Caco-2 (cell line): ENCODE measurements at regions of chr9 and their contacts with region 1.

Region 1: GRCh38 chr9:36008774-36009300 is 27.9 kb upstream of the RECK start:
- DNase-seq: peak; percentile 70 to 73
- H3K4me3 ChIP-seq: no peak overlapping the region
- H3K4me3 Mint-ChIP-seq: no peak overlapping the region
- H3K27ac Mint-ChIP-seq: no peak overlapping the region
- H3K4me1 ChIP-seq: peaks cover 21% of the 10 kb centered on the region
- H3K4me1 Mint-ChIP-seq: peaks cover 18% of the 10 kb centered on the region
- H3K27me3 ChIP-seq: no peaks in the 10 kb centered on the region
- H3K27me3 Mint-ChIP-seq: peaks cover 13% of the 10 kb centered on the region
- CTCF ChIP-seq: peak; percentile 96 to 98

Region 2: DNA sequence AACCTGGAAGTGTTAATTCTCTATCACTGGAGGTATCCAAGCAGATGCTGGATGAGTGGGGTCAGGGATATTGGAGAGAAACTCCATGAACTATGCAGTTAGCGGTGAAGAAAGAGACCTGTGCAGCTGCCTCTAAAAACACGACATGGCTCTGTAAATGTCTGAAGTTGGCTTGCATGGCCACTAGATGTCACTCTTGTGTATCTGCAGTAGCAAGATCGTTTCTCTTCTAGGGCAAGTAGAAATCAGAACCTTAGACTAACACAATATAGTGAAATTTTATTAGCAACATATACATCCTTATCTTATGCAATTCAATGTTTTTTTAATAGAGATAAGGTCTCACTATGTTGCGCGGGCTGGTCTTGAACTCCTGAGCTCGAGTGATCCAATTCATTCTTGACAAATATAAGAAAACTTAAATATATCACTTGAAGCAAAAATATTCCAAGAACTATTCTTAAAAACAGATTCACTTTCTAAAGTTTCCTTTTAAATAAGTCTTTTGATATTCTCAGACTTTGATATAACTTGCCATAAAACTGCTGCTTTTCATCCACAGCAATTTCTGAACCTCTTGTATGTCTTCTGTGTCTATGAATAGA is 53.8 kb before region 1 on chr9:
- CTCF ChIA-PET with region 1: interaction called, 4 read pairs
- POLR2A ChIA-PET with region 1: no interaction called
- intact Hi-C with region 1: loop called (anchors 5 kb)
- DNase-seq: peak; percentile 63 to 66
- H3K4me3 ChIP-seq: no peak overlapping the region
- H3K4me3 Mint-ChIP-seq: no peak overlapping the region
- H3K27ac Mint-ChIP-seq: no peak overlapping the region
- H3K4me1 ChIP-seq: peaks cover 10% of the 10 kb centered on the region
- H3K4me1 Mint-ChIP-seq: peaks cover 6% of the 10 kb centered on the region
- H3K27me3 ChIP-seq: no peaks in the 10 kb centered on the region
- H3K27me3 Mint-ChIP-seq: peaks cover 11% of the 10 kb centered on the region
- CTCF ChIP-seq: peak; percentile 75 to 82

Region 3: GRCh38 chr9:35972093-35972492 is 36.7 kb before region 1 on chr9:
- CTCF ChIA-PET with region 1: no interaction called
- POLR2A ChIA-PET with region 1: no interaction called
- intact Hi-C with region 1: no loop called
- DNase-seq: no peak
- H3K4me3 ChIP-seq: no peak overlapping the region
- H3K4me3 Mint-ChIP-seq: no peak overlapping the region
- H3K27ac Mint-ChIP-seq: no peak overlapping the region
- H3K4me1 ChIP-seq: no peaks in the 10 kb centered on the region
- H3K4me1 Mint-ChIP-seq: no peaks in the 10 kb centered on the region
- H3K27me3 ChIP-seq: no peaks in the 10 kb centered on the region
- H3K27me3 Mint-ChIP-seq: peaks cover 7% of the 10 kb centered on the region
- CTCF ChIP-seq: no peak

Region 4: DNA sequence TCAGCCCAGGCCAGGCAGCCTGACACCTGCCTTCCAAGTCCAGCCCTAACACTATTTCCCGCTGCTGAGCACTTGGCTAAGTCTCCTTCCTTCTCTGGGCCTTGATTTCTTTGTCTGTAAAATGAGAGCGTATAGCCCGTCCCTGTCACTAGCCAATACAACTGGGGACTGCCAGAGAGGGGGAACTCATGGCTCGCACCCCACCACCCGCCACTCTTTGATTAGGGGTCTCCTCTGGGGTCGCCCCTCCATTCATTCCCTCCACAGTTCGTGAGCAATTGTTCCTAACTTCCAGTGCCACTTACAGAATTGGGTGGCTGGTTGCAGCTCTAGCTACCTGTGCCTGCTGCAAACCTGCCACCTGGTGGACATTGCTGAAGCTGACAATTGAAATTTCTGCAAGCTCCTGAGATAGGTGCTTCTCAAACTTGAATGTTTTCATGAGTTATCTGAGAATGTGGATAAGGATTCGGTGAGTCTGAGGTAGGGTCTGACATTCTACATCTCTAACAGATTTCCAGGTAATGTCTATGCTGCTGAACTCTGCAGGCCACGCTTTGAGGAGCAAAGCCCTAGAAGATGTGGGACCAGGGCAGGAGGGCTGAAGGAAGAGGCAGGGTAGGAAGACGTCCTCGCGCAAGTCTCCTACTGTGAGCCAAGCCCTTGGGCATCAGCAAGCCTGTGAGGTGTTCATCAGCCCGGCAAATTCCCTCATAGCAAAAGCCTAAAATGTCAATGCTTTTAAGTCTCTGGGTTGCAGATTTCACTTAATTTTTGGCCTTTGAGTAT is 14.6 kb after region 1 on chr9:
- CTCF ChIA-PET with region 1: interaction called, 15 read pairs
- POLR2A ChIA-PET with region 1: no interaction called
- intact Hi-C with region 1: loop called (anchors 1 kb)
- DNase-seq: peak; percentile 75 to 76
- H3K4me3 ChIP-seq: no peak overlapping the region
- H3K4me3 Mint-ChIP-seq: no peak overlapping the region
- H3K27ac Mint-ChIP-seq: no peak overlapping the region
- H3K4me1 ChIP-seq: no peaks in the 10 kb centered on the region
- H3K4me1 Mint-ChIP-seq: no peaks in the 10 kb centered on the region
- H3K27me3 ChIP-seq: no peaks in the 10 kb centered on the region
- H3K27me3 Mint-ChIP-seq: peaks cover 7% of the 10 kb centered on the region
- CTCF ChIP-seq: peak; percentile 76 to 92

Region 5: GRCh38 chr9:36039696-36040095 is 30.9 kb after region 1 on chr9:
- CTCF ChIA-PET with region 1: interaction called, 8 read pairs
- POLR2A ChIA-PET with region 1: no interaction called
- intact Hi-C with region 1: loop called (anchors 5 kb)
- DNase-seq: no peak
- H3K4me3 ChIP-seq: no peak overlapping the region
- H3K4me3 Mint-ChIP-seq: no peak overlapping the region
- H3K27ac Mint-ChIP-seq: no peak overlapping the region
- H3K4me1 ChIP-seq: 0 out of 2 replicates have a peak, but pooled peaks cover 4% of the 10 kb centered on the region
- H3K4me1 Mint-ChIP-seq: no peaks in the 10 kb centered on the region
- H3K27me3 ChIP-seq: no peaks in the 10 kb centered on the region
- H3K27me3 Mint-ChIP-seq: peaks cover 7% of the 10 kb centered on the region
- CTCF ChIP-seq: no peak

Region 6: GRCh38 chr9:36056896-36057295 is 48.1 kb after region 1 on chr9:
- CTCF ChIA-PET with region 1: no interaction called
- POLR2A ChIA-PET with region 1: no interaction called
- intact Hi-C with region 1: loop called (anchors 5 kb)
- DNase-seq: no peak
- H3K4me3 ChIP-seq: no peak overlapping the region
- H3K4me3 Mint-ChIP-seq: no peak overlapping the region
- H3K27ac Mint-ChIP-seq: no peak overlapping the region
- H3K4me1 ChIP-seq: no peaks in the 10 kb centered on the region
- H3K4me1 Mint-ChIP-seq: peaks cover 7% of the 10 kb centered on the region
- H3K27me3 ChIP-seq: no peaks in the 10 kb centered on the region
- H3K27me3 Mint-ChIP-seq: no peaks in the 10 kb centered on the region
- CTCF ChIP-seq: no peak

Region 7: GRCh38 chr9:36102742-36103495 is 94.1 kb after region 1 on chr9:
- CTCF ChIA-PET with region 1: interaction called, 3 read pairs
- POLR2A ChIA-PET with region 1: no interaction called
- intact Hi-C with region 1: loop called (anchors 10 kb)
- DNase-seq: peak; percentile 80 to 81
- H3K4me3 ChIP-seq: no peak overlapping the region
- H3K4me3 Mint-ChIP-seq: no peak overlapping the region
- H3K27ac Mint-ChIP-seq: peak overlapping the region; percentile 89
- H3K4me1 ChIP-seq: peaks cover 38% of the 10 kb centered on the region
- H3K4me1 Mint-ChIP-seq: peaks cover 28% of the 10 kb centered on the region
- H3K27me3 ChIP-seq: no peaks in the 10 kb centered on the region
- H3K27me3 Mint-ChIP-seq: no peaks in the 10 kb centered on the region
- CTCF ChIP-seq: peak; percentile 74 to 78

Region 8: GRCh38 chr9:36166101-36166927 is 157.5 kb after region 1 on chr9:
- CTCF ChIA-PET with region 1: interaction called, 5 read pairs
- POLR2A ChIA-PET with region 1: no interaction called
- intact Hi-C with region 1: loop called (anchors 2 kb)
- DNase-seq: peak; percentile 66 to 85
- H3K4me3 ChIP-seq: no peak overlapping the region; the same call in 1 of the 2 replicates
- H3K4me3 Mint-ChIP-seq: peak overlapping the region; percentile 57
- H3K27ac Mint-ChIP-seq: no peak overlapping the region
- H3K4me1 ChIP-seq: peaks cover 8% of the 10 kb centered on the region
- H3K4me1 Mint-ChIP-seq: no peaks in the 10 kb centered on the region
- H3K27me3 ChIP-seq: no peaks in the 10 kb centered on the region
- H3K27me3 Mint-ChIP-seq: no peaks in the 10 kb centered on the region
- CTCF ChIP-seq: peak; percentile 76 to 84